ENCODE measurements at regions of chr12 and their contacts with region 1.

Region 1: DNA sequence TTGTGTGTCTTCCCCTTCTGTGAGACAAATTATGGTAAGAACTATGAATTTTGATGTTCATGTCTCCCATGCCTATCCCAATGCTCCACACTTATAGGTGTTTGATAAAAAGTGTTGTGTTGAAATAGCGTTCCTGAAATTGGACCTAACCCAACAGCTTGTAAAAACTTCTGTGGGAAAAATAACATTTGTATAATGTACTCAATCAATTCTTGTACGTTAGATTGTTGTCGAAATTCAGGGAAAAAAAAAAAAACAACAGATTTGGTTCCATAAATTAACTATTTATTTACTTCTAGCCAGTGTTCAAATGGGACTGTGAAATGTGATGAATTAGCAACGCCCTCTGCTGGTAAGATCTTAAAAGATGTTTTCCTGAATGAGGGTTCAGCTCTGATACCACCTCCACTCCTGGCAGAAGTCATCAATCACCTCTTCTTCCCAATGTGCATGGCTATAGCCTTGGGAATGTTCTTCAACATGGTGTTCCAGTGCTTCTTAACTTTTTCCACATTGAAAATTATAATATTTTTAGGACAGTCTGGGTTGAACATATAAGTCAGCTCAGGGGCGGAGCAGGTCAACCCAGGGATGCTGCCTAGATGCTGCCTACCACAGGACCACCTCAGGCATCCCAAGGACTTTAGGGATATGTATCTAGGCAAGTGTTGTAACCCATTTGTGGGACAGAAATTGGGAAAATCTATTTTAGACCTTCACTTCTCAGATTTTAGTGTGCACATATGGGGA is 170.6 kb downstream of the OTOGL start:
- DNase-seq: no peak
- H3K4me3 ChIP-seq: peak overlapping the region in 1 of 4 donors; percentile 19
- H3K27ac ChIP-seq: no peak overlapping the region
- H3K4me1 ChIP-seq: peaks cover 0 to 22% (median 12%) of the 10 kb centered on the region in 4 donors
- H3K27me3 ChIP-seq: no peaks in the 10 kb centered on the region
- CTCF ChIP-seq: peak; percentile 59 to 65 (median 60)
- EP300 ChIP-seq: no peak
- POLR2A ChIP-seq: no peak

Region 2: DNA sequence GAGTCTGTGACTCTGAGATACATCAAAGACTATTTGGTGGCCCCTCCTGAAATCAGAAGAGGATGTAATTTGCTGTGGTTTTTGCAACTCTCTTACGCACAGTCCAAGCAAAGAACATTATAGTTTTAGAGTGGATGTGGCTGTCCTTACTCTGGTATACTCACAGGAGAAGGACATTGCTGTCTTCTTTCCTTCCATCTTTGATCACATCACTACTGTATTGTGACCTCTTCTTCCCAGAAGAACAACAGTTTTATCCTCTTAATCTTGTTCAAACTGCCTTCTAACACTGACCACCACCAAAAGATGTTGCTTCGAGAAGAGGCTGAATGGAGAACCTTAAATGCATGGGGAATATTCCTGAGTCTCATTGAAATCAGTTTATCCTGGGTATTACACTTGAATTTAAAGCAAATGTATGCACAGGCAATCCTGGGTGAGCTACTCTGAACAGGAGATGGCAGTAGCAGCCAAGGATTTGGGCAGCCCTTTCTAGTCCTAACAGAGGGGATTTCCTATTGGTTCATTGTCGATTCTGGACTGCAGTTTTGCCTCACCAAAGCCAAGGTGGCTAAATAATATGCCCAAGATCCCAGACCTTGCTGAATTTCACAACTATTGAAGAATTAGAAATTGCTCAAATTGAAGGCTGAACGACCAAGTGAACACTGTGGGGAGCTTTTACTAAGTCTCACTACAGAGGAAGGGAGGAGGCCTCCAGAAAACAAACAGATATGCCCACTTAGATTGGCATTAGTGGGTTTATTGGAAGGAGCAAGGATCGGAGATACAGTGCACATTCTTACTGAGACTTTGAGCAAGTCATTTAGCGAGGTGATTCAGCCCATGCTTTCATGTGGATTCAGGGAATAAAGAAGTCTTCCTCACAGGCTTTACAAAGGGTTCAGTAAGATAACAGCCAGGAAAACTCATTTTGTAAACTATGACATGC is 862.0 kb before region 1 on chr12:
- intact Hi-C with region 1: loop called (anchors 10 kb)
- DNase-seq: no peak
- H3K4me3 ChIP-seq: no peak overlapping the region
- H3K27ac ChIP-seq: peak overlapping the region in 3 of 4 donors; percentile 45 to 72 (median 53)
- H3K4me1 ChIP-seq: peaks cover 3 to 25% (median 24%) of the 10 kb centered on the region in 4 donors
- H3K27me3 ChIP-seq: no peaks in the 10 kb centered on the region
- CTCF ChIP-seq: peak; percentile 60 to 66 (median 62)
- EP300 ChIP-seq: no peak
- POLR2A ChIP-seq: no peak

Region 3: DNA sequence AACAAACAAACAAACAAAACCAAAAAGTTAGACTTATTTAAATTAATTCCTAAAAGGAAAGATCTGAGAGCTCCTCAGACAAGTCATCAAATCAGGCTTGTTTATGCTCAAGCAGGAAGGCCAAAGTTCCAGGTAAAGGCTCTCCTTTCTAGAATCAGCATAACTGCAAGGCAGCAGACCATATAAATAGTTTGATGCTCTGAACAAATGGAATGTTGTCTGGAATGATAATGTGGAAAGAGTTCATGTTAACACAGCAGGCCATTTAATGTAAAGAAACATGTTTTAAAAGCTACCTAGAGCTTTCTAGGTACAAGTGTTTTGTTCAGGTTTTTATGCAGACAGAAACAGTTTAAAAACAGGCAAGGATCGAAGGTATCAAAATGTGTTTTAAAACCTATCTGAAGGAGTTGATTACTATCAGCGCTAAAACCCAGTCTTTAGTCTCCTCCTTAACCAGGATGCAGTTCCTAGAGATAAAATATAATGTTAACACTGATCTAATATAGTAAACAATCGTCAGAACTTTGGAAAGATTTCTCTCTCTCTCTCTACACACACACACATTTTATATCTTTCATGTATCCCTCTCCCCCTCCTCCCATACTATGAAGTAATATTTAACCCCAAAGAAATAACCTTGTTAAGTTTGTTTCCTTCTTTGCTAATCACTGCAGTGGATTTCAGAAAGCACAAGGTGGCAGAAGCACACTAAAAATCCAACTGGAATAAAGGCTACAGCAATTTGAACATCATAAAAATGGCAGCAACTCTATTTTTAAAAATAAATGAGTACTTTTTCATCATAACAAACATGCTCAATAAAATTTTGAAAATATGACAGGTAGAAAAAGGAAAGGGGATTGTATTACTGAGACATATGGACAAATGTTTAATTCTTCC is 714.7 kb before region 1 on chr12:
- intact Hi-C with region 1: loop called (anchors 5 kb)
- DNase-seq: no peak
- H3K4me3 ChIP-seq: no peak overlapping the region
- H3K27ac ChIP-seq: no peak overlapping the region
- H3K4me1 ChIP-seq: peaks cover 8 to 52% (median 44%) of the 10 kb centered on the region in 4 donors
- H3K27me3 ChIP-seq: no peaks in the 10 kb centered on the region
- CTCF ChIP-seq: peak; percentile 47 to 59 (median 52)
- EP300 ChIP-seq: no peak
- POLR2A ChIP-seq: no peak

Region 4: GRCh38 chr12:80195074-80195726 is 74.8 kb before region 1 on chr12:
- intact Hi-C with region 1: loop called (anchors 2 kb)
- DNase-seq: no peak
- H3K4me3 ChIP-seq: no peak overlapping the region
- H3K27ac ChIP-seq: no peak overlapping the region
- H3K4me1 ChIP-seq: peaks cover 0 to 14% (median 6%) of the 10 kb centered on the region in 4 donors
- H3K27me3 ChIP-seq: no peaks in the 10 kb centered on the region
- CTCF ChIP-seq: peak; percentile 51 to 68 (median 60)
- EP300 ChIP-seq: no peak
- POLR2A ChIP-seq: no peak

Measured in esophagus muscularis mucosa (tissue), 4 donors.